ENCODE measurements at regions of chr4 and their contacts with region 1.

Region 1: DNA sequence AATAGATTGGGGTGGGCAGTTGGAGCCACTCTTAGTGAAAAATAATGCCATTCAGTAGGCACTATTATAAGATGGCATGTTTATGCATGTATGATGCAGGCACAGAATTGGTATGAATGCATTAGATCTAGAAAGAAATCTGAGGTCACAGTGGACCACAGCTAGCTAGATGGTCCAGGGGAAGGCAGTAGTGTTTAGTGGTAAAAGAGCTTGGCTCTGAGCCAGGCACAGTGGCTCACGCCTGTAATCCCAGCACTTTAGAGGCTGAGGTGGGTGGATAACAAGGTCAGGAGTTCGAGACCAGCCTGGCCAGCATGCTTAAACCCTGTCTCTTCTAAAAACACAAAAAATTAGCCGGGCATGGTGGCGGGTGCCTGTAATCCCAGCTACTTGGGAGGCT is 43.2 kb upstream of the SLC34A2 start:
- DNase-seq: no peak
- H3K4me3 ChIP-seq: no peak overlapping the region
- H3K27ac ChIP-seq: no peak overlapping the region
- H3K4me1 ChIP-seq: no peaks in the 10 kb centered on the region
- H3K27me3 ChIP-seq: no peaks in the 10 kb centered on the region
- CTCF ChIP-seq: no peak
- POLR2A ChIP-seq: no peak

Region 2: GRCh38 chr4:25467843-25468242 is 144.6 kb before region 1 on chr4:
- intact Hi-C with region 1: loop called (anchors 2 kb)
- DNase-seq: no peak
- H3K4me3 ChIP-seq: no peak overlapping the region
- H3K27ac ChIP-seq: no peak overlapping the region
- H3K4me1 ChIP-seq: no peaks in the 10 kb centered on the region
- H3K27me3 ChIP-seq: no peaks in the 10 kb centered on the region
- CTCF ChIP-seq: no peak
- POLR2A ChIP-seq: no peak

Region 3: GRCh38 chr4:26779674-26780073 is 1167.2 kb after region 1 on chr4:
- intact Hi-C with region 1: loop called (anchors 5 kb)
- DNase-seq: peak in 1 of 2 donors; percentile 76
- H3K4me3 ChIP-seq: no peak overlapping the region
- H3K27ac ChIP-seq: peak overlapping the region; percentile 5 to 34
- H3K4me1 ChIP-seq: no peaks in the 10 kb centered on the region
- H3K27me3 ChIP-seq: no peaks in the 10 kb centered on the region
- CTCF ChIP-seq: no peak
- POLR2A ChIP-seq: no peak

Measured in breast epithelium (tissue), 4 donors.